Endothelial cell of umbilical vein (primary cell): ENCODE measurements at regions of chr12 and their contacts with region 1.

Region 1: DNA sequence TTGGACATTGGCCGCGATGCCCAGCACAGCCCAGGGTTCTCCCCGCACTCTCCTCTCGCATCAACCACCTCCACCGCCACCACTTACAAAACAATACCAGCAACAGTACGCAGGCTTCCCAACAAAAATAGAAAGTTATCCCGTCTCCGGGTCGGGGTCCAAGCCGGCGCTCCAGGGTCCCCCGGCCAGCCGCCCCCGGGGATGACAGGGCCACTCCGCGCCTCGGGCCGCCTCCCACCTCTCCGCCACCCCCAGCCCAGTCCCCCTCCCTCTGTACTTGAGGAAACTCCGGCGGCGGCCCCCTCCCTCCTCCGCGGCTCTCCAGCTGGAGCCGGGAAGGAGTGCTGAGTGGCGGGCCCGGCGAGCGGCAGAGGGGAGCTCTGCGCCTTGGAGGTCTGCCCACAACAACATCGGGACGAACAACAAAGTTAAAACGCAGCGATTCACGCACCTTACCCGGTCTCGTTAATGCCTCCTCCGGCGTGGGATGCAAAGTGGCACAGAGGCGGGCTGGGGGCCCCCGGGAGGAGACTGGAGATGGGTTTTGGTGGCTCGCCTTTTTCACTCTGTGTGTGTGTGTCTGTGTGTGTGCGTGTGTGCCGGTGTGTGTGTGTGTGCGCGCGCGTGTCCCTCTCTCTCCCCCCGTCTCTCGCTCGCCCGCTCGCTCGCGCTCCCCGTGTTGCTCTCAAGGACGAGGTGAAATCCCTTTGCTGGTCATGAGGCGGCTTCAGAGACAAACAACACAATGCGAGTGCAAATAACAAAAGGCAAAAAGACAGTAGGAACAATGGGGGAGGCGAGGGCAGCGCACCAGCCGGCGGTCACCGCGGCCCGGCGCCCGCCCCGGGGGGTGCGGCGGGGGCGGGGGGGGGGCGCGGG is 386.8 kb downstream of the BCAT1 start:
- DNase-seq: peak; percentile 60
- H3K4me3 ChIP-seq: peak overlapping the region; percentile 43 to 87 (median 73)
- H3K27ac ChIP-seq: no peak overlapping the region
- H3K4me1 ChIP-seq: peaks cover 7% of the 10 kb centered on the region
- H3K27me3 ChIP-seq: peaks cover 22 to 34% of the 10 kb centered on the region in 2 experiments
- CTCF ChIP-seq: no peak
- POLR2A ChIP-seq: no peak

Region 2: DNA sequence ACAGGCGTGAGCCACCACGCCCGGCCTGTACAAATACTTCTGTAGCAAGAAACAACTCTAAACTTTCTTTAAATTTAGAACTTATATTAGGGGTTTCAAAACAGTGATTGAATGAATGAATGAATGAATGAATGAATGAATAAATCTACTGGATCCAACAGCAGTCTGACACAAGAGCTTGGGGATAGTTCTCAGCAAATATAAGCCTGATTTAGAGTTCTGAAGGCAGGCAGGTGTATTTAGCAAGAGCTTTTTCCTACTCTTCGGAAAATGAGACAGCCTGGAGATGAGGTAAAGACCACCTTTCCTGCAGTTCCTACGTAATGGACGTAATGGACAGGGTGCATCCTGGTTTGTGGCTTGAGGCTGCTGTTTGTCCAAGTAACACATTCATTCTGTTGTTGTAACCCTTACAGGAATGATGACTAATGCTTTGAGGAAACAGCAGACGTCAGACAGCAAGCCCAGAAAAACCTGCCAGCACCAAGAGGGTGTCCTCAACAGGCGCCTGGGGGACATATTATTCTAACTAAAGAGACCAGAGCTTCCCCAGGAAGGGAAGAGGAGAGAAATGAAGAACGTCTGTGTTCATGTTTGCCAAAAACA is 335.3 kb before region 1 on chr12:
- CTCF ChIA-PET with region 1: no interaction called
- POLR2A ChIA-PET with region 1: interaction called, 3 read pairs
- dilution Hi-C with region 1: no loop called
- intact Hi-C with region 1: loop called (anchors 2 kb)
- DNase-seq: peak; percentile 95
- H3K4me3 ChIP-seq: no peak overlapping the region
- H3K27ac ChIP-seq: peak overlapping the region; percentile 80
- H3K4me1 ChIP-seq: peaks cover 27% of the 10 kb centered on the region
- H3K27me3 ChIP-seq: no peaks in the 10 kb centered on the region
- CTCF ChIP-seq: no peak
- POLR2A ChIP-seq: no peak

Region 3: DNA sequence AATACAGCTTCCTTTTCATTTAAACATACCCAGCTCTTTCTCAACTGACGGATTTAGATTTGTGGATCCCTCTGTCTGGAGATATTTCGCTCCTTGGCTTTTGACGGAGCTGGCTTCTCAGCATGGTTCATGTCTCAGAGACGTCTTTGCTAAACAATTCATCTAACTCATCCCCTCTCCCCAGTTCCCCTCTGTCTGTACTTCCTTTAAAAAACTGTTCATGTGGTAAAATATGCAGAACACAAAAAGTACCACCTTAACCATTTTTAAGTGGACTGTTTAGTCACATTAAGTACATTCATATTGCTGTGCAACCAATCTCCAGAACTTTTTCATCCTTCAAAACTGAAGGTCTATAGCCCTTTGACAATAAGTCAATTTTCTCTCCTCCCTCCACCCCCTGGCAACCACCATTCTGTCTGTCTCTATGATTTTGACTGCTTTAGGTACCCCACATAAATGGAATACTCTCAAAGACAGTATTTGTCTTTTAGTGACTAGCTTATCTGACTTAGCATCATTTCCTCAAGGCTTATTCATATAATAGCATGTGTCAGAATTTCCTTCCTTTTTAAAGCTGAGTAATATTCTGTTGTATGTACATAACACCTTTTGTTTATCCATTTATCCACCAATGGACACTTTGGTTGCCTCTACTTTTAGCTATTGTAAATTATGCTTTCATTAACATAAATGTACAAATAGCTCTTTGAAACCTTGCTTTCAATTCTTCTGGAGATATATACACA is 212.9 kb before region 1 on chr12:
- CTCF ChIA-PET with region 1: no interaction called
- POLR2A ChIA-PET with region 1: no interaction called
- dilution Hi-C with region 1: no loop called
- intact Hi-C with region 1: loop called (anchors 5 kb)
- DNase-seq: peak; percentile 73
- H3K4me3 ChIP-seq: no peak overlapping the region
- H3K27ac ChIP-seq: peak overlapping the region; percentile 84
- H3K4me1 ChIP-seq: peaks cover 12% of the 10 kb centered on the region
- H3K27me3 ChIP-seq: no peaks in the 10 kb centered on the region
- CTCF ChIP-seq: no peak
- POLR2A ChIP-seq: no peak

Region 4: GRCh38 chr12:24360907-24361306 is 201.2 kb before region 1 on chr12:
- CTCF ChIA-PET with region 1: no interaction called
- POLR2A ChIA-PET with region 1: no interaction called
- dilution Hi-C with region 1: no loop called
- intact Hi-C with region 1: loop called (anchors 5 kb)
- DNase-seq: no peak
- H3K4me3 ChIP-seq: no peak overlapping the region
- H3K27ac ChIP-seq: no peak overlapping the region
- H3K4me1 ChIP-seq: no peaks in the 10 kb centered on the region
- H3K27me3 ChIP-seq: peaks cover 0 to 1% of the 10 kb centered on the region in 2 experiments
- CTCF ChIP-seq: no peak
- POLR2A ChIP-seq: no peak

Region 5: DNA sequence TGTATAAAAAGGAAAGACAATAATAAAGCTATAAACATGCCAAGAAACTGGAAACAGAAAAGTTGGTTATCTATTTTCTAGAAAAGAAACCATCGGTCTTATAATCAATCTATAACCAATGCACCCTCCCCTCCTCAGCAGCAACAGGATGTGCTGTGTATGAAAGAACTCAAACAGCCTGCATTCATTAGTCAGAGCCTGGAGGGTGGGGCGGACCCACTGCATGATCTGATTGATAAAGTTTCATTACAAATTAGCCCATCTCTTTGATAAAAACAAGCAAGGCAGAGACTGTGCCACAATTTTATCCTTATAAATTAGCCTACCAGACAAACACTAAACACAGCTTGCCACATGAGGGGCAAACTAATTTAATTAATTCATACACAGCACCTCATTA is 61.3 kb before region 1 on chr12:
- CTCF ChIA-PET with region 1: no interaction called
- POLR2A ChIA-PET with region 1: no interaction called
- dilution Hi-C with region 1: no loop called
- intact Hi-C with region 1: no loop called
- DNase-seq: no peak
- H3K4me3 ChIP-seq: no peak overlapping the region
- H3K27ac ChIP-seq: no peak overlapping the region
- H3K4me1 ChIP-seq: no peaks in the 10 kb centered on the region
- H3K27me3 ChIP-seq: no peaks in the 10 kb centered on the region
- CTCF ChIP-seq: no peak
- POLR2A ChIP-seq: no peak

Region 6: DNA sequence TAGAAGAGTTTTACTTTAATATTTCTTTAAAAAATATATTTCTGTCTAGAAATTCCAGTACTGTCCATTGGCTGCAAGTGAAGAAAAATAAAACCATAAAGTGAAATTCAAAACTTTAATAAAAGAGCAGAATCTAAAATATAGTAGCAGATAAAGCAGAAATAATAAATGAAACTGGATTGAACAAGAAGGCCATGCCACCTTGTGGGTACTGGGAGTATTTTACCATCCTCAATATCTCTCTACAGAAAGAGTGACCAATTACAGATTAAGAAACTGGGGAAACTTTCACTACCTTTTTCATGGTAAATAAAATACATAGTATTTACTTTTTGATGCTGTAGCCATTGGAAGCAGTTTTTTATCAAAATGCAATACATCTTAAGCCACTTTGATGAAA is 166.2 kb after region 1 on chr12:
- CTCF ChIA-PET with region 1: interaction called, 4 read pairs
- POLR2A ChIA-PET with region 1: no interaction called
- dilution Hi-C with region 1: no loop called
- intact Hi-C with region 1: loop called (anchors 10 kb)
- DNase-seq: peak; percentile 31
- H3K4me3 ChIP-seq: no peak overlapping the region
- H3K27ac ChIP-seq: no peak overlapping the region
- H3K4me1 ChIP-seq: no peaks in the 10 kb centered on the region
- H3K27me3 ChIP-seq: peaks cover 2 to 3% of the 10 kb centered on the region in 2 experiments
- CTCF ChIP-seq: peak; percentile 10 to 48
- POLR2A ChIP-seq: no peak